CD4-positive, alpha-beta T cell (primary cell): ENCODE measurements at regions of chr1 and their contacts with region 1.

Region 1: GRCh38 chr1:41268154-41268770 is 26.2 kb upstream of the SCMH1 start:
- DNase-seq: peak; percentile 38 to 80 (median 57)
- ATAC-seq: peak; percentile 70
- H3K4me3 ChIP-seq: no peak overlapping the region
- H3K4me3 Mint-ChIP-seq: no peak overlapping the region
- H3K27ac ChIP-seq: no peak overlapping the region
- H3K27ac Mint-ChIP-seq: no peak overlapping the region
- H3K4me1 ChIP-seq: peaks cover 6% of the 10 kb centered on the region
- H3K4me1 Mint-ChIP-seq: no peaks in the 10 kb centered on the region
- H3K27me3 ChIP-seq: no peaks in the 10 kb centered on the region
- H3K27me3 Mint-ChIP-seq: no peaks in the 10 kb centered on the region
- CTCF ChIP-seq: peak; percentile 97

Region 2: DNA sequence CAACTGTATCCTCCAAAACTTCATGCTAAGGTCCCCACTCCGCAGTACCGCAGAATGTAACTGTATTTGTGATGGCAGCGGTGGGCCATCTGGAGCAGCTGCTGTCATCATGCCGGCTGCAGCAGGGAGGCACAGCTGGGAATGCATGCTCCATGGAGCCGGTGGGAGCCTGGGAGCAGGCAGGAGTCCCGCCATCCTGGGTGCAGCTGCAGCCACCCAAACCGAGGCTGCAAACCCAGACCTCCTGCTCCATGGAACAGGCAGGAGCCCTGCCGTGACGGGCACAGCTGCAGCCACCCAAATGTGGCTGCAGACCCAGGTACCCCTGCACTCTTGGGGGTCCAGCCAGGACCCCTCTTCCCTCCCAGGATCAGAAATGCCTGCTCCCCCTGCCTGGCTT is 106.4 kb before region 1 on chr1:
- CTCF ChIA-PET with region 1: no interaction called
- POLR2A ChIA-PET with region 1: no interaction called
- intact Hi-C with region 1: no loop called
- DNase-seq: no peak
- ATAC-seq: no peak
- H3K4me3 ChIP-seq: no peak overlapping the region
- H3K4me3 Mint-ChIP-seq: no peak overlapping the region
- H3K27ac ChIP-seq: no peak overlapping the region
- H3K27ac Mint-ChIP-seq: no peak overlapping the region
- H3K4me1 ChIP-seq: no peaks in the 10 kb centered on the region
- H3K4me1 Mint-ChIP-seq: no peaks in the 10 kb centered on the region
- H3K27me3 ChIP-seq: no peaks in the 10 kb centered on the region
- H3K27me3 Mint-ChIP-seq: no peaks in the 10 kb centered on the region
- CTCF ChIP-seq: no peak

Region 3: DNA sequence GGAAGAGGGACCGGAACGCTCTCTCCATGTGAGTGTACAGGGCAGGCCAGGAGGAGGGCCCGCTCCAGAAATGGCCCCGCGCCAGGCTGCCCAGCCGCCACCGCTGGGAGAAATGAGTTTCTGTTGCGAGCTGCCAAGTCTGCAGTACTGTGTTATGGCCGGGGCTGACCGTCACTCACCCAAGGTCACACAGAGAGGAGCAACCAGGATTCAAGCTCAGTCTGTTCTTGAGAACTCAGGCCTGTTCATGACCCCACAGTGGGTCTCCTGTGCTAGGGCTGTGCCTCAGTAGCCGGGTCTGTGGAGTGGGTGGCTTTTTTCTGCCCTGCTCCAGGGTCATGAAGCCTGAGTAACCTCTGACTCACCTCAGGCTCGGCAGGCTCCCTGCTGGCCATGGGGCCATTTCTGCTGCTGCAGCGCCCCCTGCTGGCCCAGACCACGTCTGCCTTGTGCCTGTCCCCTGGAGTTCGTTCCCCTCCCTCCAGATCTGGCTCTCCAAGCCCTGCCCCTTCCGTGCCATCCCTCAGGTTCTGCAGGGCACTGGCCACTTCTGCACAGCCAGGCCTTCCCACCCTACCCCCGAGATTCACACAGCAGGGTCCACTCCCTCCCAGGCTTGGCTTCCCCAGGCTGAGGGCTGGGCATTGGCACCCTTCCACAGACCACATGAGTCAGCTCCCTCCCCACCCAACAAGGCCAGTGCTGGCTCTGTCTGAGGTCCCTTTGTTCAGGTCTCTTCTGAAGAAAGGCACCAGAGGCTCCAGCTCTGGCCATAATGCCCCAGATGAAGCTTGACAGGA is 164.4 kb after region 1 on chr1:
- CTCF ChIA-PET with region 1: no interaction called
- POLR2A ChIA-PET with region 1: no interaction called
- intact Hi-C with region 1: loop called (anchors 1 kb)
- DNase-seq: peak; percentile 47 to 79 (median 56)
- ATAC-seq: peak; percentile 56
- H3K4me3 ChIP-seq: no peak overlapping the region
- H3K4me3 Mint-ChIP-seq: no peak overlapping the region
- H3K27ac ChIP-seq: no peak overlapping the region
- H3K27ac Mint-ChIP-seq: no peak overlapping the region
- H3K4me1 ChIP-seq: peaks cover 4% of the 10 kb centered on the region
- H3K4me1 Mint-ChIP-seq: no peaks in the 10 kb centered on the region
- H3K27me3 ChIP-seq: peaks cover 13 to 16% of the 10 kb centered on the region in 2 experiments
- H3K27me3 Mint-ChIP-seq: peaks cover 53% of the 10 kb centered on the region
- CTCF ChIP-seq: peak; percentile 49